Naive thymus-derived CD4-positive, alpha-beta T cell (primary cell): ENCODE measurements at regions of chr6 and their contacts with region 1.

Region 1: DNA sequence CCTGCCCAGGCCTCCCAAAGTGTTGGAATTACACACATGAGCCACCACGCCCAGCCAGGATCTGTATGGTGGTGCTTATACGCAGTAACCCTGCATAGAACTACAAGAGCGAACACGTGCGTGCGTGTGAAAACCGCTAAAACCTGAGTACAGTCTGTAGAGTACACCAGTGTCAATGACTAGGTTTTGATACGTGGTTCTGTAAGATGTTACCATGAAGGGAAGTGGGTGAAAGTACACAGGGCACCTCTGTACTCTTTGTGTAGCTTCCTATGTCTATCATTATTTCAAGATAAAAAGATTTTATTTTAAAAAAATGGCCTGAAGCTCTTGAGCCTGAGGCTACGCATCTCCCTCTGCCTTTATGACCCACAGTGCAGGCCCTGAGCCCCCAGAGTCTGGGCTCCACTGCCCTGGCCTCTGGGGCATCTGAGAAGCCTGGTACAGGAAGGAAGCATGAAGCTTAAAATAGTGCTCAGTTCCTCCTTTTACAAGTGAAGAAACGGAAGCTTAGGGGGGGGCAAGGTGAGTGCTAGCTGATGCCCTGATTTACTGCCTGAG is 21.6 kb downstream of the LY86 start:
- DNase-seq: peak in 7 of 9 donors; percentile 70 to 88 (median 81)
- ATAC-seq: peak; percentile 84
- H3K4me3 ChIP-seq: peak overlapping the region; percentile 25
- H3K4me3 Mint-ChIP-seq: peak overlapping the region; percentile 29 to 83 (median 72)
- H3K27ac ChIP-seq: peak overlapping the region; percentile 65
- H3K27ac Mint-ChIP-seq: peak overlapping the region; percentile 81 to 100 (median 96)
- H3K4me1 ChIP-seq: peaks cover 51 to 61% of the 10 kb centered on the region in 2 donors
- H3K4me1 Mint-ChIP-seq: peaks cover 45 to 86% (median 68%) of the 10 kb centered on the region in 7 donors
- H3K27me3 ChIP-seq: no peaks in the 10 kb centered on the region
- H3K27me3 Mint-ChIP-seq: no peaks in the 10 kb centered on the region

Region 2: DNA sequence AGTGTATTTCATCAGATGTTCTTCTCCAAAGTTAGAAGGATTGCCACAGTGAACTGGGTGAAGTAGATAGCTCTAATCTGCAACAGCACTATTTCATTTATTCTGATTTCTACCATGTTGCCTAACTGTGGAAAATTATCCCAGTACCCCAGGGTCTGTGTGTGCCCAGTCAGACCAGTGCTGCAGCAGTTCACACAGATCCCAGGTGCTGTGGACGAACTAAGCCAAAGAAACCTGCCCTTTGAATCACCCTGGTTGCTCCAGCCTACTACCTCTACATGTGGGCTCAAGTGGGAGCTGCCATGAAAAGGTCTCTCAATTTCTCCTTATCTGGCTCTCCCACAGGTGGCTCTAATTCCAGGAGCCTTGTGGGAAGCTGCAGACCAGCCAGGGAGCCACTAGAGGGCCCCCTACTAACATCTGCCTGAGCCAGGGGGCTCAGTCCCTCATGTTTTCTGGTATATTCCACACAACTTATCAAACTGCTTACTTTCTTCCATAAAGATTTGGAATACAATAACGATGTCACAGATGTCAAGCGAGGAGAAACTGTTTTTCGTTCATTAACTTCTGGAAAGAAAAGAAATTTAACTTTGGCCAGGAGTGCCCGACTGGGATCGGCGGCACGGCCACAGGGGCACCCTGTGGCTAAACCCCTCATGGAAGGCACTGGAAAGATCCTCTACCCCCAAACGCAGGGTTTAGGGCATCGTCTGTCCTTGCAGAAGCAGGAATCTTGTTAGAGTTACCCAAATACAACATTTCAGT is 53.2 kb before region 1 on chr6:
- CTCF ChIA-PET with region 1: interaction called, 6 read pairs
- POLR2A ChIA-PET with region 1: interaction called, 4 read pairs
- intact Hi-C with region 1: loop called (anchors 1 kb)
- DNase-seq: peak in 7 of 9 donors; percentile 30 to 68 (median 57)
- ATAC-seq: peak; percentile 76
- H3K4me3 ChIP-seq: no peak overlapping the region
- H3K4me3 Mint-ChIP-seq: no peak overlapping the region
- H3K27ac ChIP-seq: no peak overlapping the region
- H3K27ac Mint-ChIP-seq: peak overlapping the region in 5 of 9 donors; percentile 19 to 64 (median 32)
- H3K4me1 ChIP-seq: peaks cover 0 to 4% of the 10 kb centered on the region in 2 donors
- H3K4me1 Mint-ChIP-seq: peaks cover 0 to 50% (median 18%) of the 10 kb centered on the region in 7 donors
- H3K27me3 ChIP-seq: no peaks in the 10 kb centered on the region
- H3K27me3 Mint-ChIP-seq: peaks cover 0 to 15% (median 0%) of the 10 kb centered on the region in 5 donors

Region 3: GRCh38 chr6:6599468-6599873 is 10.6 kb before region 1 on chr6:
- CTCF ChIA-PET with region 1: interaction called, 5 read pairs
- POLR2A ChIA-PET with region 1: interaction called, 15 read pairs
- intact Hi-C with region 1: loop called in 1 of 2 experiments (anchors 1 kb)
- DNase-seq: no peak
- ATAC-seq: no peak
- H3K4me3 ChIP-seq: no peak overlapping the region
- H3K4me3 Mint-ChIP-seq: no peak overlapping the region
- H3K27ac ChIP-seq: no peak overlapping the region
- H3K27ac Mint-ChIP-seq: no peak overlapping the region
- H3K4me1 ChIP-seq: peaks cover 0 to 21% of the 10 kb centered on the region in 2 donors
- H3K4me1 Mint-ChIP-seq: peaks cover 23 to 63% (median 51%) of the 10 kb centered on the region in 7 donors
- H3K27me3 ChIP-seq: no peaks in the 10 kb centered on the region
- H3K27me3 Mint-ChIP-seq: no peaks in the 10 kb centered on the region

Region 4: GRCh38 chr6:6646859-6647258 is 36.7 kb after region 1 on chr6:
- CTCF ChIA-PET with region 1: interaction called, 3 read pairs
- POLR2A ChIA-PET with region 1: interaction called, 3 read pairs
- intact Hi-C with region 1: loop called in 1 of 2 experiments (anchors 1 kb)
- DNase-seq: no peak
- ATAC-seq: no peak
- H3K4me3 ChIP-seq: no peak overlapping the region
- H3K4me3 Mint-ChIP-seq: no peak overlapping the region
- H3K27ac ChIP-seq: no peak overlapping the region
- H3K27ac Mint-ChIP-seq: no peak overlapping the region
- H3K4me1 ChIP-seq: no peaks in the 10 kb centered on the region
- H3K4me1 Mint-ChIP-seq: peaks cover 4 to 44% (median 10%) of the 10 kb centered on the region in 7 donors
- H3K27me3 ChIP-seq: no peaks in the 10 kb centered on the region
- H3K27me3 Mint-ChIP-seq: no peaks in the 10 kb centered on the region

Region 5: GRCh38 chr6:6661684-6662083 is 51.6 kb after region 1 on chr6:
- CTCF ChIA-PET with region 1: interaction called, 3 read pairs
- POLR2A ChIA-PET with region 1: interaction called, 46 read pairs
- intact Hi-C with region 1: loop called (anchors 1 kb)
- DNase-seq: no peak
- ATAC-seq: no peak
- H3K4me3 ChIP-seq: no peak overlapping the region
- H3K4me3 Mint-ChIP-seq: peak overlapping the region in 1 of 10 donors; percentile 9
- H3K27ac ChIP-seq: no peak overlapping the region
- H3K27ac Mint-ChIP-seq: peak overlapping the region in 7 of 9 donors; percentile 40 to 99 (median 95)
- H3K4me1 ChIP-seq: peaks cover 0 to 43% of the 10 kb centered on the region in 2 donors
- H3K4me1 Mint-ChIP-seq: peaks cover 25 to 72% (median 65%) of the 10 kb centered on the region in 7 donors
- H3K27me3 ChIP-seq: no peaks in the 10 kb centered on the region
- H3K27me3 Mint-ChIP-seq: no peaks in the 10 kb centered on the region

Region 6: GRCh38 chr6:6712258-6712999 is 102.3 kb after region 1 on chr6:
- CTCF ChIA-PET with region 1: no interaction called
- POLR2A ChIA-PET with region 1: no interaction called
- intact Hi-C with region 1: no loop called
- DNase-seq: no peak
- ATAC-seq: peak; percentile 43
- H3K4me3 ChIP-seq: no peak overlapping the region
- H3K4me3 Mint-ChIP-seq: peak overlapping the region; percentile 39 to 86 (median 74)
- H3K27ac ChIP-seq: no peak overlapping the region
- H3K27ac Mint-ChIP-seq: peak overlapping the region in 8 of 9 donors; percentile 11 to 81 (median 54)
- H3K4me1 ChIP-seq: peaks cover 0 to 19% of the 10 kb centered on the region in 2 donors
- H3K4me1 Mint-ChIP-seq: peaks cover 13 to 43% (median 29%) of the 10 kb centered on the region in 7 donors
- H3K27me3 ChIP-seq: no peaks in the 10 kb centered on the region
- H3K27me3 Mint-ChIP-seq: peaks cover 0 to 25% (median 7%) of the 10 kb centered on the region in 5 donors

Region 7: DNA sequence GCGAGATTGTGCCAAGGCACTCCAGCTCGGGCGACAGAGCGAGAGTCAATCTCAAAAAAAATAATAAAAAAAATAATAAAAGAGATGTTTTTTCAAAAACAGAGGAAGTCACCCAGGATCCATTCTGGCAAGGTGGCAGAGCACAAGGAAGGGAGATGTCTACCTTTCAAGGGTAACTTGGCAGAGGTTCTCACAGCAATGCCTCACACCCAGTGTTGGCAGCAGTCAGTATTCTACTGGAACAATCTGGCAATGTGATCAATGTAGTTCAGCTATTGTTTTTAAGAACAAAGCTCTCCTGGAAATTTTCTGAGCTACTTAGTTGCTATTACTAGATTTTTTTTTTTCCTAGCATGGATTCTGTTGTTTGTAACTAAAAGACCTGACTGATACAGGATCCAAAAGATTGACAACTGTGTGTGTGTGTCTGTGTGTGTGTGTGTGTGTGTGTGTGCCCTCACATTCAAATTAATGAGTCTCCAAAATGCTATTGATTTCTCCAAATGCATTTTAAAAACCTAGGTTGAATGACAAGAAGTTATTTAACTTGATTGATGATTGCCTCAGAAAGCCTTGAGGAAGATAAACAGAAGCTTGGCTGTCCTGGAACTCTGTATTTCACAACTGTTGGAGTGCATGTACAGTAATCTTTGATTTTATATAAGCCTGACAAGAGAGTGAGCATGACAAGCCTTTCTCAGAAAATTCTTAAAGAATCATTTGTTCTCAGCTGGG is 383.6 kb after region 1 on chr6:
- CTCF ChIA-PET with region 1: no interaction called
- POLR2A ChIA-PET with region 1: no interaction called
- intact Hi-C with region 1: no loop called
- DNase-seq: no peak
- ATAC-seq: no peak
- H3K4me3 ChIP-seq: no peak overlapping the region
- H3K4me3 Mint-ChIP-seq: no peak overlapping the region
- H3K27ac ChIP-seq: no peak overlapping the region
- H3K27ac Mint-ChIP-seq: no peak overlapping the region
- H3K4me1 ChIP-seq: no peaks in the 10 kb centered on the region
- H3K4me1 Mint-ChIP-seq: no peaks in the 10 kb centered on the region
- H3K27me3 ChIP-seq: no peaks in the 10 kb centered on the region
- H3K27me3 Mint-ChIP-seq: peaks cover 0 to 30% (median 0%) of the 10 kb centered on the region in 5 donors